ENCODE measurements at regions of chr15 and their contacts with region 1.

Region 1: DNA sequence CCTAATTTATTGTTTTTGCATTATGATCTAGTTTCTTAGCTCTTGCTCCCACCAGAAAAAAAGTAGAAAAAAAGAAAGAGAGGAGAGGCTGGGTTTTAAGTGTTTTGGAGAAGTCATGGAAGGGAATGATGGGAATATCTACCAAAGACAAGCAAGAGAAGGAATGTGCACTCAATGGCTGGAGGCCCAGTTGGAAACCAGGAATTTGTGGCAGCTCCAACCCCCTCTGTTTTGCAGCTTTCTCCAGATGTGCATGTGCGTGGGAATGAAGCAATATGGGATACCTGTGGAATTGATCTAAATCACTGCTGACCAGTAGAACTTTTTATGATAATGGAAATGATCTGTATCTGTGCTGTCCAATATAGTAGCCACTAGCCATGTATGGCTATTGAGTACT is 27.1 kb downstream of the EIF2AK4 start:
- DNase-seq: no peak
- H3K4me3 ChIP-seq: no peak overlapping the region
- H3K27ac ChIP-seq: no peak overlapping the region
- H3K4me1 ChIP-seq: no peaks in the 10 kb centered on the region
- H3K27me3 ChIP-seq: no peaks in the 10 kb centered on the region
- CTCF ChIP-seq: no peak

Region 2: DNA sequence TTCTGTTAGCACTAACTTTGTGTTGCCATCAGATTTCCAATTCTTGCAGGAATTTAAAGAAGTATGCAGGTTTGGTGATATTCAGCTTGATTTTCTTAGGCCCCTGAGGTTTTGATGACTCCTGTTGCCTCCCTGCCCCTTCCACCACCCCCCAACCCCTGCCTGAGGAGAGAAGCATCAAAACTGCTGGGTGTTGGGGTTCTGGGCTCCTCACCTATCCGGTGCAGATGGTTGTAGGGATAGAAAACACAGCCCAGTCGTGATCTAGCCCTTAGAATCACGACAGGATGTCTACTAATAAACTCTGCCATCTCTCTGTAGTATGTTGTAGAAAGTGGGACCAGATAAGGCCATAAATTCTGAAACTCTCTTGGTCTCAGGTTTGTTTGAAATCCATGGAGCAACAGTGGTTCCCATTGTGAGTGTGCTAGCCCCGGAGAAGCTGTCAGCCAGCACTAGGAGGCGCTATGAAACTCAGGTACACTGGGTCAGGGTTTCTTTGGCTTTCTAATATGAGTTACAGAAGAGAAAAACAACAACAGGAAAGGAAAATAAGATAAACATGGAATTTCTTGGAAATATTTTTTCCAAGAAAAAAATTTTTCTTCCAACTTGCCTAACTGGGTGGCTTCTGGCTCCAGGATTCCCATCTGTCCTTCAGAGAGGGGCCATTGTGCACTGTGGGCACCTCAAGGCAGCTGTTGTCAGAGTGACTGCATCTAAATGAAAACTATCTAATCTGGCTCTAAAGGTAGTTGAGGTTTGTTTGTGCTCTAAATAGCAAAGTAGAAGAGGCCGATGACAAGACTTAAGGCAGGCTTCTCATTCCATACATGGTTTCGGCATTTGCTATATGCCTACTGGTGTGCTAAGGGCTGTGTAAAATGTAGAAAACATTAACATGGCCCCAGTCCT is 69.2 kb after region 1 on chr15:
- CTCF ChIA-PET with region 1: no interaction called
- dilution Hi-C with region 1: no loop called
- in situ Hi-C with region 1: no loop called
- intact Hi-C with region 1: loop called (anchors 10 kb)
- DNase-seq: no peak
- H3K4me3 ChIP-seq: no peak overlapping the region
- H3K27ac ChIP-seq: no peak overlapping the region
- H3K4me1 ChIP-seq: no peaks in the 10 kb centered on the region
- H3K27me3 ChIP-seq: no peaks in the 10 kb centered on the region
- CTCF ChIP-seq: peak; percentile 63 to 69